B cell (primary cell): ENCODE measurements at regions of chr9 and their contacts with region 1.

Region 1: DNA sequence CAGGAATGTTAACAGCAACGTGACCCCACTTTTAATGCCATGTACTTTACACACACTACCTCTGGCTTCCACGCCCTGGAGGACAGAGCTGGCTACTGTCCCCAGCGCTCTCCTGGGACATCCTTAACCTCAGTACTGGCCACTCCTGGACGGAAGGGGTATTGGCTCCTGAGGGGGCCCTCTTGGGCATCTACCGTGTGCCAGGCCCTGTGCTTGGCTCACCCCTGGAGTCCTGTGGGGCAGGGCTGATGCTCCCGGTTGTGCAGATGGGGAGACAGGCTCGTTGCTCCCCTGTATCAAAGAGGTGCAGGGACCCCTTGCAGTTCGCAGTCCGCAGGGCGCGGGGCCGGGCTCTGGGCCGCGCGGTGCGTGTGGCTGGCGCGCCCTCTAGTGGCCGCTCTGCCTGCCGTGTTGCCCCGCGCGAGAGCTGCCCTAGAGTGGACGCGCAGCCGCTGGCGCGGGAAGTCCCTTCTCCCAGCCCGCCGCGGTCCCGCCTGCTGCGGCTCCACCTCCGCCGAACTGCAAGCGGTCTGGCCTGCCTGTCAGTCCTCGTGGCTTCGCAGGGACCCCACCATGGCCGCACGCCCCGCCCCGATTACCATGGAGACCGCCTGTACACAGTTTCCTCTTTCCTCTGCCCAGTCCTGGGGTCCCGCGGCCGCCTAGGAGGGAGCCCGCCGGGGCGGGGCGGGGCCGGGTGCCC is at the start of gene WDR38:
- DNase-seq: peak; percentile 88
- ATAC-seq: peak; percentile 80
- H3K4me3 ChIP-seq: peak within 1 kb of the TSS in 4 of 5 experiments; percentile 33 to 55 (median 48)
- H3K4me3 Mint-ChIP-seq: peak within 1 kb of the TSS; percentile 88
- H3K27ac ChIP-seq: peak within 1 kb of the TSS in 1 of 2 donors; percentile 74
- H3K27ac Mint-ChIP-seq: peak within 1 kb of the TSS; percentile 84
- H3K4me1 ChIP-seq: peaks cover 7 to 9% of the 10 kb centered on the region in 2 donors
- H3K4me1 Mint-ChIP-seq: peaks cover 8% of the 10 kb centered on the region
- H3K27me3 ChIP-seq: no peaks in the 10 kb centered on the region
- H3K27me3 Mint-ChIP-seq: no peaks in the 10 kb centered on the region
- CTCF ChIP-seq: peak; percentile 99
- total RNA-seq, gene WDR38: not detected in 2 replicates

Region 2: GRCh38 chr9:124839612-124840299 is 13.2 kb before region 1 on chr9:
- CTCF ChIA-PET with region 1: interaction called, 19 read pairs
- POLR2A ChIA-PET with region 1: no interaction called
- intact Hi-C with region 1: no loop called
- DNase-seq: peak; percentile 18
- ATAC-seq: no peak
- H3K4me3 ChIP-seq: no peak overlapping the region
- H3K4me3 Mint-ChIP-seq: no peak overlapping the region
- H3K27ac ChIP-seq: no peak overlapping the region
- H3K27ac Mint-ChIP-seq: no peak overlapping the region
- H3K4me1 ChIP-seq: no peaks in the 10 kb centered on the region
- H3K4me1 Mint-ChIP-seq: no peaks in the 10 kb centered on the region
- H3K27me3 ChIP-seq: peaks cover 0 to 6% (median 0%) of the 10 kb centered on the region in 4 experiments
- H3K27me3 Mint-ChIP-seq: peaks cover 12% of the 10 kb centered on the region
- CTCF ChIP-seq: peak; percentile 24

Region 3: GRCh38 chr9:124868511-124869465 is 15.8 kb after region 1 on chr9:
- CTCF ChIA-PET with region 1: interaction called, 51 read pairs
- POLR2A ChIA-PET with region 1: interaction called, 3 read pairs
- intact Hi-C with region 1: loop called (anchors 1 kb)
- DNase-seq: peak; percentile 92
- ATAC-seq: peak; percentile 72
- H3K4me3 ChIP-seq: peak overlapping the region; percentile 79 to 100 (median 97)
- H3K4me3 Mint-ChIP-seq: peak overlapping the region; percentile 94
- H3K27ac ChIP-seq: peak overlapping the region; percentile 92 to 96
- H3K27ac Mint-ChIP-seq: peak overlapping the region; percentile 97
- H3K4me1 ChIP-seq: peaks cover 44 to 52% of the 10 kb centered on the region in 2 donors
- H3K4me1 Mint-ChIP-seq: peaks cover 54% of the 10 kb centered on the region
- H3K27me3 ChIP-seq: no peaks in the 10 kb centered on the region
- H3K27me3 Mint-ChIP-seq: no peaks in the 10 kb centered on the region
- CTCF ChIP-seq: no peak

Region 4: DNA sequence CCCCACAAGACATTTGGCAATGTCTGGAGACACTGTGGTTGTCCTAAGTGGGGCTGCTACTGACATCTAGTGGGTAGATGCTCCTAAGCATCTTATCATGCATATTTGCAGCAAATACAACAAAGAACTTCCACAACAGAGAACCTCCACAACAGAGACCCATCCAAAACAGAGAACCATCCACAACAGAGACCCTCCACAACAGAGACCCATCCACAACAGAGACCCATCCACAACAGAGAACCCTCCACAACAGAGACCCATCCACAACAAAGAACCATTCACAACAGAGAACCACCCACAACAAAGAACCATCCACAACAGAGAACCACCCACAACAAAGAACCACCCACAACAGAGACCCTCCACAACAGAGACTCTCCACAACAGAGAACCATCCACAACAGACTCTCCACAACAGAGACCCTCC is 41.8 kb after region 1 on chr9:
- CTCF ChIA-PET with region 1: interaction called, 7 read pairs
- POLR2A ChIA-PET with region 1: no interaction called
- intact Hi-C with region 1: loop called (anchors 5 kb)
- DNase-seq: peak; percentile 61
- ATAC-seq: peak; percentile 53
- H3K4me3 ChIP-seq: no peak overlapping the region
- H3K4me3 Mint-ChIP-seq: no peak overlapping the region
- H3K27ac ChIP-seq: no peak overlapping the region
- H3K27ac Mint-ChIP-seq: no peak overlapping the region
- H3K4me1 ChIP-seq: no peaks in the 10 kb centered on the region
- H3K4me1 Mint-ChIP-seq: peaks cover 4% of the 10 kb centered on the region
- H3K27me3 ChIP-seq: no peaks in the 10 kb centered on the region
- H3K27me3 Mint-ChIP-seq: no peaks in the 10 kb centered on the region
- CTCF ChIP-seq: peak; percentile 53

Region 5: DNA sequence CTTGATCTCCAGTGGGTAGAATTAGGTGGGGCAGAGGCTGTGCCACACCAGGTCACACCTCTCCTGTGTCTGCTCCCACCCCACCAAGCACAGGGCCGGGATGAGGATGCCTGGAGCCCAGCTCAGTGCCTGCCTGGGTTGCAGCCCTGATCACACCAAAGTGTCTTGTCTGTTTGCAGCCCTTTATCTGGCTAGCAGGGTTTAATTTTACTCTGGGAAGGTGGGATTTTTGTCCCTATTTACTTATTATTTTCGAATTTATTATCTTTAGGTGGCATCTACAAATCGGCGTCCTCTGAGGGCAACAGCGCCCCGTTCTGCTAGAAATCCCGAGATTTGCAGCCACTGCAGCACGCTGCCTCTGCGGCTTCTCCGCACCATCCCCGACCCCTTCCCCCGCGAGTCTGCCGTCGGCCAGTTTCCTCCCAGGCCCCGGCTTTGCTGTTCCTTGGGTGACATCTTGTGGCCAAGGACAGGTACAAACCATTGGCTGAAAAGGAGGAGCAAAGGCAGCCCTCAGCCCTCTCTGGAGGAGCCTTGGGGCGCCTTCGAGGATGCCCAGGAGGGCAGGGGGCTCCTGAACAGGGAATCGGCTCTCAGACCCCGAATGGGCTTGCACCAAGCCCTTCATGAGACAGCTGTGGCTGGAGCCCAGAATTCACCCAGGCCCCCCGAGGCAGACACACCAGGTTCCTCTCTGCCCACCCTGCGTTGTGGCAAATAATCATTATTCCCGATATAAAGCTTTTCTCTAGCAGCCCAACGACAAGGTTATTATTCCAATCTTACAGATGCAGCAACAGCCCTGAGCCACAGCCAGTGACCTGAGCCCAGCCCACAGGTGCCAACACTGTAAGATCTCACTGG is 521.7 kb after region 1 on chr9:
- CTCF ChIA-PET with region 1: interaction called, 3 read pairs
- POLR2A ChIA-PET with region 1: no interaction called
- intact Hi-C with region 1: loop called (anchors 5 kb)
- DNase-seq: peak; percentile 75
- ATAC-seq: peak; percentile 91
- H3K4me3 ChIP-seq: peak overlapping the region in 3 of 5 experiments; percentile 15 to 38 (median 15)
- H3K4me3 Mint-ChIP-seq: peak overlapping the region; percentile 66
- H3K27ac ChIP-seq: no peak overlapping the region
- H3K27ac Mint-ChIP-seq: no peak overlapping the region
- H3K4me1 ChIP-seq: peaks cover 7 to 10% of the 10 kb centered on the region in 2 donors
- H3K4me1 Mint-ChIP-seq: peaks cover 7% of the 10 kb centered on the region
- H3K27me3 ChIP-seq: peaks cover 0 to 32% (median 3%) of the 10 kb centered on the region in 4 experiments
- H3K27me3 Mint-ChIP-seq: peaks cover 7% of the 10 kb centered on the region
- CTCF ChIP-seq: peak; percentile 77